ENCODE measurements at regions of chr2 and their contacts with region 1.

Region 1: GRCh38 chr2:44087036-44087713 is 81.5 kb upstream of the PPM1B start:
- H3K4me3 Mint-ChIP-seq: peak overlapping the region; percentile 70
- H3K27ac Mint-ChIP-seq: peak overlapping the region; percentile 73
- H3K4me1 Mint-ChIP-seq: peaks cover 25% of the 10 kb centered on the region
- H3K27me3 Mint-ChIP-seq: peaks cover 2% of the 10 kb centered on the region

Region 2: GRCh38 chr2:44178950-44179349 is 91.8 kb after region 1 on chr2:
- intact Hi-C with region 1: no loop called
- H3K4me3 Mint-ChIP-seq: no peak overlapping the region
- H3K27ac Mint-ChIP-seq: no peak overlapping the region
- H3K4me1 Mint-ChIP-seq: peaks cover 57% of the 10 kb centered on the region
- H3K27me3 Mint-ChIP-seq: no peaks in the 10 kb centered on the region

Region 3: DNA sequence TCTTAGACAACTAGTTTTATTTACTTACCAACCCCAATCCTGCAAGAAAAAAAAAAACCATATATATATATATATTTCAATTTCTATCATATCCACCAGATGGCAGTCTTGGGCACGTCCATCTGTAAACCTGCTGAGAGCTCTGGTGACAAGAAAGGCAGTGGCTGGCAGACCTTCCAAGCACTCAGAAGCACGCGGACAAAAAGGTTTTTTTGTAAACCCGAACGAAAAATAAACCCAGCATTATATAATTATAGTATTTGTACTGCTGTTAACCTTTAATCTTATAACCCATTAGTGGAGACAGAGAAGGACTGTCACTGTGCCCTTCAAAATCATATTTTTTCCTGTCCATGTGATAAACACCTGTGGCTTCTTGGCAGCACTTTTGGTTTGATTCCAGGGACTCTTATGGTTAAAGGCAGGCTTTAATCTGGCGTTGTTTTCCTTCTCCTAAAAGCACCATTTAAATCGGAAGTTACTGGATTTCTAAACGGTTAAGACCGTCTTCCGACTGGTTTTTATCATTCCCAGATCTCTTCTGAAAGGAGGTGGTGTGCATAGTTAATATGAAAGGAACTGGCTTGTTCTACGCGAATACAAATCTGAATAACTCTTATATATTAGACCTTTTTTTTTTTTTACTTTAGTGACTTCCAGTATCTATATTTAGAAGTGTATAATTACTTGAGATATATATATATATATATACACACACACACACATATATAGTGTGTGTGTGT is 157.1 kb after region 1 on chr2:
- intact Hi-C with region 1: loop called (anchors 2 kb)
- H3K4me3 Mint-ChIP-seq: no peak overlapping the region
- H3K27ac Mint-ChIP-seq: no peak overlapping the region
- H3K4me1 Mint-ChIP-seq: peaks cover 7% of the 10 kb centered on the region
- H3K27me3 Mint-ChIP-seq: no peaks in the 10 kb centered on the region

Region 4: DNA sequence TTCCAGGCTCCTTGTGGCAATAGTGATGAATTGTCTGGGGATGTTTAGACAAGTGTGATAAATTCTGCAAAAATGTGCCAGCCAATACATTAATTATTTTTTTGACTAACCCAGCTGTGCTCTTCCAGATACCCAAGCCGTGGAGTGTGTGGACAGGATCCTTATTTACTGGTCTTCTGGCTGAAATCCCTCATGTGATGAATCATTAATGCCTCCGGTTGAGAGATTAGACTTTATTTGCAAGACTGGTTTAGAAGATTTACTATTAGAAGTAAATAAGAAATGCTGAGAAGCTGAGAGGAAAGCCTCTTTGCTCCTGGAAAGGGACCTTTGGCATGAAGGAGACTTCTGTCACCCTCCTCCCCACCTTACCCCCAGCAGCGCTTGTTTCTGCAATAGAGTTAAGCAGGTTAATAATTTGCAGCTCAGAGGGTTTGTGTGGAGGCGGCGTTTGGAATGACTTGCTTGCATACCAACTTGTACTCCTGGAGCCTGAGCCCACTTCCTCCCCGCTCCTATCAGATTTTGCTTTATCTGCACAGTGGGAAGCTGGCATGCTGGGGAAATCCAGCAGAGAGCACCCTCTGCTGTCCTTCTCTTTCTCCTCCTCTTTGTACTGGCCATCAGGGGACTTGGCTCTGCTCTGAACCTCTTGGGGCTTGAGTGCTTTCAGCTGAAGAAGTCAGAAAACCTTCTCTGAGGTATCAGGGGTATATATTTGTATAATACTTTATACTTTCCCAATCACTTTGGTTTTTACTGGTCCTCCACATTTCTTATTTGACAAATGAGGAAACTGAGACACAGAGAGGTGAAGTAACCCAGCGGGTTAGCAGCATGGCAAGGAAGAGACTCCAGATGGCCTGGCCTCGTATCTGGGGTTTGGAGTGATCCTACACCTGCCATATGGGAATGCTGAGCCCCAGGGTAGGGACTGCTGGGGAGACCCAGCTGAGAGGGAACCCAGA is 204.4 kb after region 1 on chr2:
- intact Hi-C with region 1: loop called (anchors 2 kb)
- H3K4me3 Mint-ChIP-seq: no peak overlapping the region
- H3K27ac Mint-ChIP-seq: no peak overlapping the region
- H3K4me1 Mint-ChIP-seq: peaks cover 6% of the 10 kb centered on the region
- H3K27me3 Mint-ChIP-seq: peaks cover 8% of the 10 kb centered on the region

Region 5: DNA sequence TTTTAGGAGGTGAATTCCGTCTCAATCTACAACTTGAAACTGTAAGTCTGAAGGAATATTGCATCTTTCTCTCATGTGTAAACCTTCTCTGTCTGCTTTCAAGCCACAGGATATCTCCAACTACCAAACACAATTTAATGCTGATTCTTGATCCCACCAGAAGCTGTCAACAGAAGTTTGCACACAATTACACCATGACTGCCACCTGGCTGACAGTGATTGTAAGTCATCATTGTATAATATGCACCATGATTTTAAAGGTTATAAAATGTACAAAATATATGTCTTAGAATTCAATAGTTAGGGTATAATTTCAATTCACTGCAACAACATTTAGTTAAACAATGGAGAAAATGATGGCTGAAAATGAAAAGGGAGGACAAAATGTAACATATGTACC is 255.7 kb after region 1 on chr2:
- intact Hi-C with region 1: loop called (anchors 10 kb)
- H3K4me3 Mint-ChIP-seq: no peak overlapping the region
- H3K27ac Mint-ChIP-seq: no peak overlapping the region
- H3K4me1 Mint-ChIP-seq: no peaks in the 10 kb centered on the region
- H3K27me3 Mint-ChIP-seq: no peaks in the 10 kb centered on the region